Endothelial cell of umbilical vein (primary cell): ENCODE measurements at regions of chr19 and their contacts with region 1.

Region 1: GRCh38 chr19:54390942-54391577 is 24.2 kb upstream of the TTYH1 start:
- DNase-seq: peak; percentile 57
- H3K4me3 ChIP-seq: no peak overlapping the region
- H3K27ac ChIP-seq: no peak overlapping the region
- H3K4me1 ChIP-seq: peaks cover 19% of the 10 kb centered on the region
- H3K27me3 ChIP-seq: peaks cover 1 to 4% of the 10 kb centered on the region in 2 experiments
- CTCF ChIP-seq: peak; percentile 58 to 69
- POLR2A ChIP-seq: no peak

Region 2: GRCh38 chr19:54325194-54325621 is 65.9 kb before region 1 on chr19:
- CTCF ChIA-PET with region 1: interaction called, 24 read pairs
- POLR2A ChIA-PET with region 1: no interaction called
- dilution Hi-C with region 1: no loop called
- intact Hi-C with region 1: loop called (anchors 1 kb)
- DNase-seq: peak; percentile 51
- H3K4me3 ChIP-seq: no peak overlapping the region
- H3K27ac ChIP-seq: no peak overlapping the region
- H3K4me1 ChIP-seq: no peaks in the 10 kb centered on the region
- H3K27me3 ChIP-seq: peaks cover 0 to 2% of the 10 kb centered on the region in 2 experiments
- CTCF ChIP-seq: peak; percentile 70 to 79
- POLR2A ChIP-seq: no peak

Region 3: DNA sequence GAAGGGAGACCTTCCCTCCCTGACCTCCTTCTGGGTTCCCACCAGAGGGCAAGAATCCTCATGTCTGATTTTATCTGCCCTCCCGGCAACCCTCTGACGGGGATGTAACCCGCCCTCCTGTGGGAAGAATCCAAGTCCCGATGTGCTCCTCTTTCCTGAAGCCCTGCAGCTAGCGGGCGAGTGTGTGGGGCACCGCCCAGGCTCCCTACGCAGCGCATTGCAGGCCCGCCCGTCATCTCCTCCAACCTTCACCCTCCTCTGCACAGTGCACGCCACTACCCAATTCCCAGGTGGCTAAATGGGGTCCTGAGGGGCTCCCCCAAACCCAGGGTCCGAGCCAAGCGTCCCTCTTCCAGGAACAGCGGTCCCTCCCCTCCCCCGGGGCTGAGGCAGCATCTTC is 33.7 kb before region 1 on chr19:
- CTCF ChIA-PET with region 1: interaction called, 3 read pairs
- POLR2A ChIA-PET with region 1: no interaction called
- dilution Hi-C with region 1: no loop called
- intact Hi-C with region 1: loop called (anchors 5 kb)
- DNase-seq: no peak
- H3K4me3 ChIP-seq: no peak overlapping the region
- H3K27ac ChIP-seq: no peak overlapping the region
- H3K4me1 ChIP-seq: no peaks in the 10 kb centered on the region
- H3K27me3 ChIP-seq: no peaks in the 10 kb centered on the region
- CTCF ChIP-seq: no peak
- POLR2A ChIP-seq: no peak